WTC11 (cell line): ENCODE measurements at regions of chr19 and their contacts with region 1.

Region 1: GRCh38 chr19:33176670-33177416 is 17.3 kb upstream of the LRP3 start:
- DNase-seq: peak; percentile 97
- ATAC-seq: peak; percentile 94
- H3K4me3 Mint-ChIP-seq: peak overlapping the region; percentile 91
- H3K27ac Mint-ChIP-seq: peak overlapping the region; percentile 83
- H3K4me1 Mint-ChIP-seq: peaks cover 22% of the 10 kb centered on the region
- H3K27me3 Mint-ChIP-seq: peaks cover 15% of the 10 kb centered on the region
- CTCF ChIP-seq: no peak

Region 2: GRCh38 chr19:32988724-32989123 is 188.1 kb before region 1 on chr19:
- CTCF ChIA-PET with region 1: no interaction called
- POLR2A ChIA-PET with region 1: no interaction called
- DNase-seq: no peak
- ATAC-seq: no peak
- H3K4me3 Mint-ChIP-seq: no peak overlapping the region
- H3K27ac Mint-ChIP-seq: no peak overlapping the region
- H3K4me1 Mint-ChIP-seq: no peaks in the 10 kb centered on the region
- H3K27me3 Mint-ChIP-seq: no peaks in the 10 kb centered on the region
- CTCF ChIP-seq: no peak

Region 3: DNA sequence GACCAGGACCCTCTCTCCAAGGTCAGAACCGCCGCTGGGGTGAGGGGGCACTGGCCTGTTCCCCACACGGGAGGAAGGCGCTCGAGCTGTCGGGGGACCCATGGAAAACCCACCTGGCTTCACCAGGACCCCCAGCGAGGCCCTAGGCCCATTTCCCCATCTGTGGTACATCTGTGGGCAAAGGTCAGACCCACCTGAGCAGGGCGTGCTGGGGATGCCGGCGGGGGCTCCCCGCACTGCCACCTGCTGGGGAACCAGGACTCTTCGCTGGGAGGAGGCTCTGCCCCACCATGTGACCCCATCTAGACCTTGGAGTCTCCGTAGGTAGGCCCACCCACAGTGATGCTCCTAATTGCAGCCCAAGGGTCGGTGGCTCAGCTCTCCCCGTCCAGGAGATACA is 44.4 kb before region 1 on chr19:
- CTCF ChIA-PET with region 1: interaction called, 11 read pairs
- POLR2A ChIA-PET with region 1: no interaction called
- DNase-seq: peak; percentile 53
- ATAC-seq: peak; percentile 67
- H3K4me3 Mint-ChIP-seq: no peak overlapping the region
- H3K27ac Mint-ChIP-seq: no peak overlapping the region
- H3K4me1 Mint-ChIP-seq: peaks cover 9% of the 10 kb centered on the region
- H3K27me3 Mint-ChIP-seq: no peaks in the 10 kb centered on the region
- CTCF ChIP-seq: no peak

Region 4: DNA sequence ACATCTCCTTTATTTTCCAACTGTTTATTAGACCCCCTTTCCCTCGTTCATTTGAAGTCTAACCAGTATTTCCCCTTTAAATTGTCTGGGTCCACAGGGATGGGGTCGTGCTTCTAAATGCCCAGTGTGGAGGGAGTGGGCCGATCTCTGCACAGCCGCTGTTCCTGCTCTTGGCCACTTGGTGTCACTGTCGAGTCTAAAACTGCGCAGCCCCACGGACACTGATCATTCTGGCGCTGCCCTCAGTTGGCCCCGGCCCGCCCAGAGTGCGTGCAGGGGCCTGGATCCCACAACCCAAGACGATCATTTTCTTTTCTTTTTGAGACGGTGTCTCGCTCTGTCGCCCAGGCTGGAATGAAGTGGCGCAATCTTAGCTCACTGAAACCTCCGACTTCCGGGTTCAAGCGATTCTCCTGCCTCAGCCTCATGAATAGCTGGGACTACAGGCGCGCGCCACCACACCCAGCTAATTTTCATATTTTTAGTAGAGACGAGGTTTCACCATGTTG is 32.9 kb before region 1 on chr19:
- CTCF ChIA-PET with region 1: interaction called, 19 read pairs
- POLR2A ChIA-PET with region 1: interaction called, 7 read pairs
- DNase-seq: peak; percentile 75
- ATAC-seq: peak; percentile 95
- H3K4me3 Mint-ChIP-seq: no peak overlapping the region; the same call in 1 of the 2 replicates
- H3K27ac Mint-ChIP-seq: no peak overlapping the region
- H3K4me1 Mint-ChIP-seq: peaks cover 9% of the 10 kb centered on the region
- H3K27me3 Mint-ChIP-seq: no peaks in the 10 kb centered on the region; the same call in 1 of the 2 replicates
- CTCF ChIP-seq: peak; percentile 77

Region 5: DNA sequence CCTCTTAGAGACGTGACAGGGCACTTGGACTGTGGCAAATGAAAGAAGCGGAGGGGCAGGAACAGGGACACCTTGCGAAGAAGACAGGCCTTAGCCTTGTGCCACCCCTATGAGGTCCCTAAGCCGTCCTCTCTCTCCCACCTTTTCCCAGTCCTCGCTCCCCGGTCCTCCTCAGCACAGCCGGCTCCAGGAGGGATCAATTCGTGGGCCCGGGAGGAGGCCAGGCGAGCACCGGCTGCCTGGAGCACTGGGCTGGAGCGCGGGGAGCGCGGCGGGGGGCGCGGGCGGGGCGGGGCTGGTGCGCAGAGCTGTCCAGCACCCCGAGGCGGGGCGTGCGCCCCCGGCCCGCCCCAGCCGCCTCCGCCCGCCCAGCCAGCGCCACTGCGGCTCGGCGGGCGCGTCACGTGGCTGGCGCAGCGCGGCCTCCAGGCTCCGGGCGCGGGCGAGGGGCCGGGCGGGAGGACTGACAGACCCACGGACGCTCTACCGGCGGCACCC is 17.1 kb after region 1 on chr19 and contains the start of gene LRP3:
- CTCF ChIA-PET with region 1: interaction called, 19 read pairs
- POLR2A ChIA-PET with region 1: no interaction called
- DNase-seq: peak; percentile 38
- ATAC-seq: peak; percentile 52
- H3K4me3 Mint-ChIP-seq: peak within 1 kb of the TSS; percentile 73
- H3K27ac Mint-ChIP-seq: no peak within 1 kb of the TSS
- H3K4me1 Mint-ChIP-seq: 0 out of 2 replicates have a peak, but pooled peaks cover 3% of the 10 kb centered on the region
- H3K27me3 Mint-ChIP-seq: peaks cover 30% of the 10 kb centered on the region
- CTCF ChIP-seq: no peak
- total RNA-seq, gene LRP3: 37.7 to 47.0 TPM (median 39.5 TPM) in 3 replicates

Region 6: GRCh38 chr19:33214596-33214995 is 37.8 kb after region 1 on chr19:
- CTCF ChIA-PET with region 1: interaction called, 14 read pairs
- POLR2A ChIA-PET with region 1: interaction called, 4 read pairs
- DNase-seq: peak; percentile 65
- ATAC-seq: peak; percentile 76
- H3K4me3 Mint-ChIP-seq: no peak overlapping the region
- H3K27ac Mint-ChIP-seq: no peak overlapping the region; the same call in 1 of the 2 replicates
- H3K4me1 Mint-ChIP-seq: 0 out of 2 replicates have a peak, but pooled peaks cover 6% of the 10 kb centered on the region
- H3K27me3 Mint-ChIP-seq: no peaks in the 10 kb centered on the region
- CTCF ChIP-seq: no peak

Region 7: DNA sequence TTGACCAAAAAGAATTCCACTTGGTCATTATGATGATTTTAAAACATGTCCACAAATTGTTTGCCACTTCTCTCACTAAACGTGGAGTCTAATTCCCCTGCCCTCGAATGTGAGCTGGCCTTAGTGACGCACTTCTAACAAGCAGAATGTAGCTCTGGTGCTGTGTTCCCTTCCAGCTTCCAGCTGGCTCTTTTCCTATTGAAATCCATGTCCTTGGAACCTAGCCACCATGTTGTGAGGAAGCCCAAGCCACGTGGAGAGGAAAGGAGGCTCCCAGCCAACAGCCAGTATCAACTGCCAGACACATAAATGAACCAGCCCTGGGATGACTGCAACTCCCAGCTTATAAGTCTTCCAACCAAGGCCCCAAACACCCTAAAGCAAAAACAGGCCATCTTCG is 149.1 kb after region 1 on chr19:
- CTCF ChIA-PET with region 1: no interaction called
- POLR2A ChIA-PET with region 1: no interaction called
- DNase-seq: no peak
- ATAC-seq: no peak
- H3K4me3 Mint-ChIP-seq: no peak overlapping the region
- H3K27ac Mint-ChIP-seq: no peak overlapping the region
- H3K4me1 Mint-ChIP-seq: peaks cover 3% of the 10 kb centered on the region; the same call in 1 of the 2 replicates
- H3K27me3 Mint-ChIP-seq: peaks cover 3% of the 10 kb centered on the region; the same call in 1 of the 2 replicates
- CTCF ChIP-seq: no peak

Region 8: DNA sequence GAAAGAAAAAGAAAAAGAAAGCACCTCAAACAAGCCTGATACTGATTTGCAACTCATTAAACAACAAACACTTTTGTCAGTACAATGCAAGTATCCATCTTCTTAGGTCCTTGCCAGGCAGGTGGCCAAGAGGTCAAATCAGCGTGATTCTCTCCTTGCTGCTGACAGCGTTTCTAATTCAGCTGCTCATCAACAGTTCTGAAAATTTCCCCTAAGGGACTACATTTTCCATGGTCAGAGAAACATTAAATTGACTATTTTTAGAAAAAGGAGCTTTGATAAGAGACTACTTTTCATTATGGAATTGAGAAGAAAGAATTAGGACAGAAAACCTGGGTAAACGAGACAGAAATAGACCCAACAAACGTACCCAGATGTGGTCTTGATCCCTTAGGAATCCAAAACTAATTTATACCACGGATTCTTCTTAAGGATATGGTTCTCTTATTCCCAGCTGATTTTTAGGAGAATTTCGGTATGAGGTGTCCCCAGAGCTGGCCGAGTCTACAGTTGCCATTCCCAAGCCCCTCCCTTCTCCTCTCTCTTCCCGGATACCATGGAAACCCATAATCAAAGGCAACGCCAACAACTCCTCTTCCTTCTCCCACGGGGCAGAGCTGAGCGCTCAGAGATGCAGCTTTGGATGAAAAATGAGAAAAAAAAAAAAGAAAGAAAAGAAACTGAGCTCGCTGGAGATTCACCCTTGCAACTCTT is 167.2 kb after region 1 on chr19:
- CTCF ChIA-PET with region 1: no interaction called
- POLR2A ChIA-PET with region 1: no interaction called
- DNase-seq: no peak
- ATAC-seq: peak; percentile 62; the same call in 1 of the 2 replicates
- H3K4me3 Mint-ChIP-seq: no peak overlapping the region
- H3K27ac Mint-ChIP-seq: no peak overlapping the region
- H3K4me1 Mint-ChIP-seq: 0 out of 2 replicates have a peak, but pooled peaks cover 3% of the 10 kb centered on the region
- H3K27me3 Mint-ChIP-seq: peaks cover 4% of the 10 kb centered on the region
- CTCF ChIP-seq: no peak